ENCODE measurements at regions of chr11 and their contacts with region 1.

Region 1: DNA sequence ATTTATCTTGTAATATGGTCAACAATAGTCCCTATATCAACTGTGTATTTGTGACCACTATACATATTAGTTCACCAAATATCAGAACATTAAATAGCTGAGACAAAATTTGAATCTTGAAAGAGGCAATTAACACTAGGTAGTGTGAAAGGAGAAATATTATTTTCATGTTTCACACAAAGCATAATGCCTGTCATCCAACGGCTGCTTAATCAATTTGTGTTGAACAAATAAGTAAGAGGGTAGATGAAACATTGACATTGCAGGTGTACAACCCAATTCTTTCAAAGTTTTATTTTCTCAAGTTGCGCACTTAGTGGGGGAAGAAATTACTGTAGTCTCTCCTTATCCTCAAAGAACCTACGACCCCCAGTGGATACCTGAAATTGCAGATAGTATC is 3.4 kb upstream of the OR8I2 start:
- DNase-seq: no peak
- ATAC-seq: no peak
- H3K4me3 Mint-ChIP-seq: no peak overlapping the region
- H3K27ac Mint-ChIP-seq: no peak overlapping the region
- H3K4me1 Mint-ChIP-seq: no peaks in the 10 kb centered on the region
- H3K27me3 Mint-ChIP-seq: no peaks in the 10 kb centered on the region
- CTCF ChIP-seq: no peak

Region 2: GRCh38 chr11:55826919-55827318 is 262.8 kb before region 1 on chr11 and contains the start of gene OR5L2:
- CTCF ChIA-PET with region 1: no interaction called
- POLR2A ChIA-PET with region 1: no interaction called
- intact Hi-C with region 1: no loop called
- DNase-seq: no peak
- ATAC-seq: no peak
- H3K4me3 Mint-ChIP-seq: no peak within 1 kb of the TSS
- H3K27ac Mint-ChIP-seq: no peak within 1 kb of the TSS
- H3K4me1 Mint-ChIP-seq: no peaks in the 10 kb centered on the region
- H3K27me3 Mint-ChIP-seq: no peaks in the 10 kb centered on the region
- CTCF ChIP-seq: no peak
- total RNA-seq, gene OR5L2: not detected

Region 3: DNA sequence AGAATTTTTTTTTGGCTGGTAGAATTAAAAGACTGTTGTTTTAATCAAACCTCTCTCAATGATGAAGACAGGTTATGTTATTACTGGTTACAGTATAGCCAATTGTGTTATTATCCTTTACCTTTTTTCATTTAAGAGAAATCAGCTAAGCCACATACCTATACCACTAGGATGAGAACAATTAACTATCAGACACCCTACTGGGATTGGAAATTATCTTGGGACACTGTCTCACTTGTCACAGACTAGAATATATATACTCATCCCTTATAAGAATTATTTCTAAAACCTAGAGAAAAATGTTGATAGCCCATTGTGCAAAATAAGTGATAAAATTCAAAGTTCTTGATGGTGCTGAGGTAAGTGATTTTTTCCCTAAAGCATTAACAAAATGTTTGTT is 62.3 kb before region 1 on chr11 and contains the start of gene OR5AS1:
- CTCF ChIA-PET with region 1: no interaction called
- POLR2A ChIA-PET with region 1: no interaction called
- intact Hi-C with region 1: loop called (anchors 10 kb)
- DNase-seq: no peak
- ATAC-seq: no peak
- H3K4me3 Mint-ChIP-seq: no peak within 1 kb of the TSS
- H3K27ac Mint-ChIP-seq: no peak within 1 kb of the TSS
- H3K4me1 Mint-ChIP-seq: no peaks in the 10 kb centered on the region
- H3K27me3 Mint-ChIP-seq: no peaks in the 10 kb centered on the region
- CTCF ChIP-seq: no peak
- total RNA-seq, gene OR5AS1: not detected

Region 4: DNA sequence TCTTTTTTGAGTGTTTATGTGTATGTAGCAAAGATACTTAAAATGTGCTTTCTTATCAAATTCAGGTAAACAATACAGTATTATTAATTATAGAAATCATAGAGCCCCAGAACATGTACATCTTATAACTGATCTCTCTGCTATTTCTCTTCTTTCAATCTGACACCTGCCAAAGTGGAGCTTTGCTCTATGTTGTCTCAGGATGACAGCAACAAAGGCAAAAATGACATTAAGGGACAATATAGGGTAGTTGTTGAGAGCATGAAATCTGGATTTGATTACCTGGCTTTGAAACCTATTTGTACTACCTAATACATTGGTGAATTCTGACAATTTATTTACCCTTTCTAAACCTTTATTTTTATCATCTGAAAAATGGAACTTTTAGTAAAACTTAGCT is 93.8 kb after region 1 on chr11:
- CTCF ChIA-PET with region 1: no interaction called
- POLR2A ChIA-PET with region 1: no interaction called
- intact Hi-C with region 1: no loop called
- DNase-seq: no peak
- ATAC-seq: no peak
- H3K4me3 Mint-ChIP-seq: no peak overlapping the region
- H3K27ac Mint-ChIP-seq: no peak overlapping the region
- H3K4me1 Mint-ChIP-seq: no peaks in the 10 kb centered on the region
- H3K27me3 Mint-ChIP-seq: no peaks in the 10 kb centered on the region
- CTCF ChIP-seq: no peak

Measured in activated CD8-positive, alpha-beta T cell treated with anti-CD3 and anti-CD28 coated beads for 36 hours (primary cell).